ENCODE measurements at regions of chr15 and their contacts with region 1.

Region 1: DNA sequence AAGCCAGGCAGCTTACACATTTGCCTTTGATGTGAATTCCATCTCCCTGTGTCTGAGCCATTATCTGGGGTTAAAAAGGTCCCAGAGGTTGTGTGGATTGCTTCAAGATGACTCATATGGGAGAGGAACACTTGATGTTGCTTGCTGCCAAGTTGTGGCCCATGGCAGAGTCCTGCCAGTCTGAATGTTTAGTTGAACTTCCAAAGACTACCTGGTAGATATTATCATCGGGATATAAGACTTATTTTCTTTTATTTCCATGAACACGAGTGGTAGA is 85.6 kb downstream of the TJP1 start:
- DNase-seq: no peak
- H3K4me3 ChIP-seq: no peak overlapping the region
- H3K27ac ChIP-seq: no peak overlapping the region
- H3K4me1 ChIP-seq: peaks cover 0 to 3% (median 0%) of the 10 kb centered on the region in 4 donors
- H3K27me3 ChIP-seq: no peaks in the 10 kb centered on the region
- CTCF ChIP-seq: no peak

Region 2: GRCh38 chr15:29685155-29686078 is 51.3 kb before region 1 on chr15:
- intact Hi-C with region 1: no loop called
- DNase-seq: peak in 1 of 2 donors; percentile 45
- H3K4me3 ChIP-seq: no peak overlapping the region
- H3K27ac ChIP-seq: no peak overlapping the region
- H3K4me1 ChIP-seq: no peaks in the 10 kb centered on the region
- H3K27me3 ChIP-seq: no peaks in the 10 kb centered on the region
- CTCF ChIP-seq: no peak

Region 3: DNA sequence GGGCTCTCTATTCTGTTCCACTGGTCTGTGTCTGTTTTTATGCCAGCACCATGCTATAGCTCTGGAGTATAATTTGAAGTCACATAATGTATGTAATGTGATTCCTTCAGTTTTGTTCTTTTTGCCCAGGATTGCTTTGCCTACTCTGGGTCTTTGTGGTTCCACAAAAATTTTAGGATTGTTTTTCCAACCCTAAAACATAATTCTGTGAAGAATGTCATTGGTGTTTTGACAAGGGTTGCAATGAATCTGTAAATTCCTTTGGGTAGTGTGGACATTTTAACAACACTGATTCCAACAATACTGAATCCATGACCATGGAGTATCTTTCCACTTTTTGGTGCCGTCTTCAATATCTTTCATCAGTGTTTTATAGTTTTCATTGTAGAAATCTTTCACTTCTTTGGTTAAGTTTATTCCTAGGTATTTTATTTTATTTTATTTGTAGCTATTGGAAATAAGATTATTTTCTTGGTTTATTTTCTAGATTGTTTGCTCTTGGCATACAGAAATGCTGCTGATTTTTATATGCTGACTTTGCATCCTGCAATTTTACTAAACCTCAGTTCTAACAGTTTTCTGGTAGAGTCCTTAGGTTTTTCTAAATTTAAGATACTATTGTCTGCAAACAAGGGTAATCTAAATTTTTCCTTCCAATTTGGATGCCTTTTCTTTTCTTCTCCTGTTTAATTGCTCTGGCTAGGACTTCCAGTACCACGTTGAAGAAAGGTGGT is 55.9 kb after region 1 on chr15:
- intact Hi-C with region 1: loop called (anchors 10 kb)
- DNase-seq: no peak
- H3K4me3 ChIP-seq: no peak overlapping the region
- H3K27ac ChIP-seq: no peak overlapping the region
- H3K4me1 ChIP-seq: peaks cover 0 to 29% (median 0%) of the 10 kb centered on the region in 4 donors
- H3K27me3 ChIP-seq: no peaks in the 10 kb centered on the region
- CTCF ChIP-seq: no peak

Region 4: GRCh38 chr15:30059771-30060170 is 323.1 kb after region 1 on chr15:
- intact Hi-C with region 1: loop called (anchors 5 kb)
- DNase-seq: no peak
- H3K4me3 ChIP-seq: no peak overlapping the region
- H3K27ac ChIP-seq: no peak overlapping the region
- H3K4me1 ChIP-seq: peaks cover 0 to 14% (median 5%) of the 10 kb centered on the region in 4 donors
- H3K27me3 ChIP-seq: no peaks in the 10 kb centered on the region
- CTCF ChIP-seq: no peak